Lower lobe of right lung (tissue), 2 donors: ENCODE measurements at regions of chr5 and their contacts with region 1.

Region 1: DNA sequence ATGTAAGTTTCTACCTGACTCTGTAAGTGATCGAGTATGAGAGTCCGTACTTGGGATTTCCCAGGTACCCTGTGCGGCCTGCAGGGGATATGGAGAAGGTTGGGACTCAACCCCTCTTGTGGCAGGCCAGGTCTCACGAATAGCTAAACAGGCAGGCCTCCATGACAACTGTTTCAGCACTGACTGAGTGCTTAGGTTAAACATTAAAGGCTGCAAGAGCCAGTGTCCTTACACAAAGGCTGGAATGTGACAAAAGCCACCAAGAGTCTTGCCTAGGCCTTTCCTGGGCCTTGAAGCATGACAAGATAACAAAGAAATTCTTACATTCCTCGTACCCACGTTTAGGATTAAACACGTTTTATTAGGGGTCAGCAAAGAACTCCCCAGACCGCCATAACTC is 58.6 kb downstream of the THBS4 start:
- DNase-seq: no peak
- ATAC-seq: peak; percentile 50 to 62
- H3K4me3 ChIP-seq: no peak overlapping the region
- H3K27ac ChIP-seq: no peak overlapping the region
- H3K4me1 ChIP-seq: no peaks in the 10 kb centered on the region
- H3K27me3 ChIP-seq: no peaks in the 10 kb centered on the region
- CTCF ChIP-seq: no peak

Region 2: DNA sequence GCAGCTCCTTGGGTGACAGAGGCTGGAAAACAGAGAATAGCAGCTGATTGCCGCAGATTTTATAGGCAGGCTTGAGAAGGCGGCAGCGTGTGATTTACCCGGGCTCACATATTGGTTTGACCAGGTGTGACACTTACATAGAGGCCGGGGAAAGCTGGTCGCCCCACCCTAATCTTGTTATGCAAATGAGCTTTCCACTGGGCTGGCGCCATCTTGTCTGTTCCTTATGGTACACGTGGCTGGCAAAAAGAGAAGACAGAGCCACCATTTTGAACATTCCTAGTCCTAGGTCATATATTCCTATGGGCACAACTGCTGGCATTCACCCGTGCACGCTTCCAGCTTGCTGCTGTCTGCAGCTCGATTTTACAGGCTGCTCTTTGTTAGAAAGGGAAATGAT is 214.7 kb after region 1 on chr5:
- intact Hi-C with region 1: loop called (anchors 5 kb)
- DNase-seq: no peak
- ATAC-seq: no peak
- H3K4me3 ChIP-seq: no peak overlapping the region
- H3K27ac ChIP-seq: no peak overlapping the region
- H3K4me1 ChIP-seq: no peaks in the 10 kb centered on the region
- H3K27me3 ChIP-seq: no peaks in the 10 kb centered on the region
- CTCF ChIP-seq: no peak